Activated T-helper 1 cell treated with anti-CD3 and anti-CD28 coated beads, Interleukin-12 subunit alpha, Interleukin-12 subunit beta, Interleukin-2, Interleukin-4 antibody, amounts not matched to agents 30 ng/mL and 10 ng/mL and 1 ng/mL, durations not matched to agents 14 hours and 24 hours and 36 hours (primary cell): ENCODE measurements at regions of chr1 and their contacts with region 1.

Region 1: DNA sequence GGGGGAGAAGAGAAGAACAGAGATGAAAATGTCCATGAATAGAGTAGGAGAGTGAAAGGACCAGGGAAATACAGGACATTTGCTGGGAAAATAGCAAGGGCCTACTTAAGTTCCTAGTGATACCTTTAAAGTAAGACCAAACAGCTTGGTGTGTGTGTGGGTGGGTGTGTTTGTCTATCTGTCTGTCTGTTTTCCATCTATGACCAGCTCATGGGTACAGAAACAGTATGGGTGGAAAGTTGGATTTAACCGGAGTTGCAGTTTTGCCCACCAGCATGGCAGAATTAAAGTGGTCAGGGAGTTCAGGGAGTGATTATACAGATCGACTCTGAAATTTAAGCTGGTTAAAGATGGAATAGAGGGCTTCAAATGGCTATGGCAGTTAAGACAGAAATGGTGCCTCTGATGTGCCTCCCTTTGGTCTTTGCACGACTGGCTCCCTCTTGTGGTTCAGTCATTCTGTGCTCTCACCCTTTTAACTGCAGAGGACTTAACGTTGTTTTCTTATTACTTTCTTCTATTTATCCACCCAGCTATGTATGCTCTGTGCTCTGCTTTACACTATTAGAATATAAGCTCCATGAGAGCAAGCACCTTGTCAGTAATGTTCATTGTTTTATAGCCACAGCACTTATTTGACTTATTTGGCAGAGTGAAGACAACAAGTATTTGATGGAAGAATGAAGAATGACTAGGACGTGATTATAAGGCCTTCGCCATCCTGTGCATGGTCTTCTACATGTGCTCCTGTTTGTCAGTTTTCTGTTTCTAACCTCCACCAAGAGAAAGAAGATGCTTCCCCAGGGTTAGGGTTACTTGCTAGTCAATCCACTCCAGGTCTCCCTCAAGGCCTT is 72.7 kb upstream of the AK4 start:
- DNase-seq: peak; percentile 47
- H3K4me3 Mint-ChIP-seq: no peak overlapping the region
- H3K27ac Mint-ChIP-seq: no peak overlapping the region
- H3K4me1 Mint-ChIP-seq: peaks cover 19% of the 10 kb centered on the region
- H3K27me3 Mint-ChIP-seq: peaks cover 10% of the 10 kb centered on the region

Region 2: DNA sequence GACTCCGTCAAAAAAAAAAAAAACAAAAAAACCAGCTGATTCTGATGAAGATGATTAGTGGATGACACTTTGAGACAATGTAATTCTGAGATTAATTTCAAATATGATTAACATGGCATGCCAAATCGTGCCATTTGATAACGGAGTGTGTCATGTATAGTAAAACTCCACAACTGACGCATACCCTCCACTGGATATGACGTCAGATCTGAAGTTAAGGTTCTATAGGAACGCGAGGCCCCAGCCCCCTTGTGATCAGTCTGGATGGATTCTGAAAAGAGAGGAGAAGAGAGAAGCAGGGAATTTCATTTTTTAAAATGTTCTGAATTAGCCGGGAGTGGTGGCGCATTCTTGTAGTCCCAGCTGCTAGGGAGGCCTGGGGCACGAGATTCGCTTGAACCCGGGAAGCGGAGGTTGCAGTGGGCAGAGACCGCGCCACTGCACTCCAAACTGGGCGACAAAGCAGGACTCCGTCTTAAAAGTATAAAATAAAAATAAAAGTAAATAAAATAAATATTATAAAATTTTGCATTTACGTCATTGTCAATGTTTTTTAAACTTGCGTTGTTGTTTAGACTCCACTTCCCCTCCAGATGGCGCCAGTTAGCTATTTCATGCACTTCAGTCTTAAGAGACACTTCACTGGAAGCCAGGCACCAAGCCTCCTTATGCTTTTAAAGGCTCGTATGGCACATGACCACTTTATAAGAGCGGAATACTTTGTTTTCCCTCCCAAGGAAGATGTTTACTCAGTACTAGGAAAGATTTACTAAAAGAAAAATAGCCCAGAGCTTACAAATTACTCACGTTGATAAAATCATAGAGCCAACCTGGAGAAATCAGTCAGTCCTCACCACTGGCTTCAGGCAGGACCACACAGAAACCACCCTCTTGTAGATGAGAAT is 806.4 kb before region 1 on chr1:
- intact Hi-C with region 1: loop called (anchors 1 kb)
- DNase-seq: peak; percentile 25
- H3K4me3 Mint-ChIP-seq: no peak overlapping the region
- H3K27ac Mint-ChIP-seq: no peak overlapping the region
- H3K4me1 Mint-ChIP-seq: no peaks in the 10 kb centered on the region
- H3K27me3 Mint-ChIP-seq: peaks cover 5% of the 10 kb centered on the region

Region 3: GRCh38 chr1:64686828-64687724 is 388.3 kb before region 1 on chr1:
- intact Hi-C with region 1: loop called (anchors 1 kb)
- DNase-seq: no peak
- H3K4me3 Mint-ChIP-seq: no peak overlapping the region
- H3K27ac Mint-ChIP-seq: no peak overlapping the region
- H3K4me1 Mint-ChIP-seq: peaks cover 7% of the 10 kb centered on the region
- H3K27me3 Mint-ChIP-seq: no peaks in the 10 kb centered on the region

Region 4: GRCh38 chr1:64744492-64745180 is 330.7 kb before region 1 on chr1 and contains the start of gene RAVER2:
- intact Hi-C with region 1: loop called (anchors 5 kb)
- DNase-seq: peak; percentile 28
- H3K4me3 Mint-ChIP-seq: peak within 1 kb of the TSS; percentile 81
- H3K27ac Mint-ChIP-seq: no peak within 1 kb of the TSS
- H3K4me1 Mint-ChIP-seq: peaks cover 5% of the 10 kb centered on the region
- H3K27me3 Mint-ChIP-seq: peaks cover 48% of the 10 kb centered on the region
- total RNA-seq, gene RAVER2: 0.34 and 0.36 TPM in 2 replicates

Region 5: GRCh38 chr1:64823691-64824476 is 251.5 kb before region 1 on chr1:
- intact Hi-C with region 1: loop called (anchors 1 kb)
- DNase-seq: peak; percentile 19
- H3K4me3 Mint-ChIP-seq: no peak overlapping the region
- H3K27ac Mint-ChIP-seq: no peak overlapping the region
- H3K4me1 Mint-ChIP-seq: peaks cover 36% of the 10 kb centered on the region
- H3K27me3 Mint-ChIP-seq: peaks cover 7% of the 10 kb centered on the region

Region 6: GRCh38 chr1:64986903-64987871 is 88.2 kb before region 1 on chr1:
- intact Hi-C with region 1: no loop called
- DNase-seq: no peak
- H3K4me3 Mint-ChIP-seq: no peak overlapping the region
- H3K27ac Mint-ChIP-seq: no peak overlapping the region
- H3K4me1 Mint-ChIP-seq: peaks cover 6% of the 10 kb centered on the region
- H3K27me3 Mint-ChIP-seq: peaks cover 5% of the 10 kb centered on the region

Region 7: DNA sequence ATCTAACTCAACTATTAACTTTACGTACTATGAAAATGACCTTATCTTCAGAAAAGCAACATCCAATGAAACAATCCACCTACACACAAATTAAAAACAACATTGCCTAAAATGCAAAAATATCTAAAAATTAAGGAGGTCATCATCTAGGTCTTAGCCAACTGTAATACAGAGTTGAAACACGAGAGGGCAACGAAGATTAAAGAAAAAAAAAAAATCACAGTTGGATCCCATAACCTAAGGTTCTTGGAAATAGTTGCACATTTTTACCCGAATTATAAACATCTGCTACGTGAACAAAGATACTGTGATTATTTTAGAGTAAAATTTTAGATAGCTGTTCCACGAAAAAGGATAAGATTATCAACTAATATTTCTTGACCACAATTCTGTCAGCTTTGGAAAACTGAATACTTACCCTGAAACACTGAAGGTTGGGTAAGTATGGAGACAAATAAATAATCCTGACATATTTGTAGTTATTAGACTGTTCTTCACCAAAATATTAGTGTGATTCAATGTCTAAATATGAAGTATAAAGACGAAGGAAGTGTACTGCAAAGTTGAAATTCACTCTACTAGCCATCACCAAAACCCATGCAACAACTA is 15.3 kb before region 1 on chr1:
- intact Hi-C with region 1: loop called (anchors 1 kb)
- DNase-seq: no peak
- H3K4me3 Mint-ChIP-seq: no peak overlapping the region
- H3K27ac Mint-ChIP-seq: no peak overlapping the region
- H3K4me1 Mint-ChIP-seq: peaks cover 17% of the 10 kb centered on the region
- H3K27me3 Mint-ChIP-seq: no peaks in the 10 kb centered on the region